Activated CD8-positive, alpha-beta T cell treated with anti-CD3 and anti-CD28 coated beads for 36 hours (primary cell): ENCODE measurements at regions of chr20 and their contacts with region 1.

Region 1: GRCh38 chr20:49846206-49846807 is 33.7 kb downstream of the SLC9A8 start:
- DNase-seq: peak; percentile 72
- ATAC-seq: peak; percentile 78
- H3K4me3 Mint-ChIP-seq: no peak overlapping the region
- H3K27ac Mint-ChIP-seq: no peak overlapping the region
- H3K4me1 Mint-ChIP-seq: no peaks in the 10 kb centered on the region
- H3K27me3 Mint-ChIP-seq: no peaks in the 10 kb centered on the region
- CTCF ChIP-seq: peak; percentile 76

Region 2: DNA sequence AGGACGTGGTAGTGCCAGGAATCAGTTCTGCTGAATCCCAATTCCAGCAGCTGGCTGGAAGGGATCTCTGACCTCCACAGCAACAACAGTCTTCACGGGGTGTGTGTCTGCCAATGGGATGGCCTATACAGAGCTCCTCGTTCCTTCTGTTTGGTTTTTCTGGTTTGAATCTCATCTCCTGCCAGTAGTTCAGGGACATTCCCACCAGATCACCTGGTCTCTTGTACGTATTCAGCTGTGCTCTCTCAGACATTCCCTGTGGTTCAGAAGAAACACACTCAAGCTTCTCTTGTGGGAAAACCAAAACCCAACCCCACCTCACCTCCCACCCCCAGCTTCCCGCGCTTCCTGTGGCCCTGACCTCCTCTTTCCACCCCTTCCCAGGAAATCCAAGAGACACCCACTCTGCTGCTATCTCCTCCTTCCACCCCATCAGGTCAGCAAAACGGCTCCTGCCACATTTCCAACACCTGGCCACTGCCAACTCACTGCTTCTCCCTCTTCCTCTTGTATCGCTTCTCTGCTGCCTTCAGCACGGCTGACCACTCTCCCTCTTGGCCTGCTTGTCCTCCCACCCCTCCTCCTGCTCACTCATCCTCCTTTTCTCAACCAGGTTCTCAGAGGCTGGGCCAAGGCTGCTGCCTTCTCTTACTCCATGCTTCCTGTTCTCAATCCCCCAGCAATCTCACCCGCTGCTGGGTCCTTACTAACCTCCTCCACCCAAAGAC is 215.1 kb before region 1 on chr20:
- CTCF ChIA-PET with region 1: interaction called, 19 read pairs
- POLR2A ChIA-PET with region 1: no interaction called
- intact Hi-C with region 1: no loop called
- DNase-seq: no peak
- ATAC-seq: no peak
- H3K4me3 Mint-ChIP-seq: no peak overlapping the region
- H3K27ac Mint-ChIP-seq: no peak overlapping the region
- H3K4me1 Mint-ChIP-seq: peaks cover 3% of the 10 kb centered on the region
- H3K27me3 Mint-ChIP-seq: peaks cover 2% of the 10 kb centered on the region
- CTCF ChIP-seq: no peak

Region 3: GRCh38 chr20:49713753-49714712 is 132.3 kb before region 1 on chr20 and contains the start of gene B4GALT5:
- CTCF ChIA-PET with region 1: interaction called, 12 read pairs
- POLR2A ChIA-PET with region 1: interaction called, 3 read pairs
- intact Hi-C with region 1: no loop called
- DNase-seq: peak; percentile 66
- ATAC-seq: peak; percentile 84
- H3K4me3 Mint-ChIP-seq: peak within 1 kb of the TSS; percentile 87
- H3K27ac Mint-ChIP-seq: peak within 1 kb of the TSS; percentile 90
- H3K4me1 Mint-ChIP-seq: peaks cover 46% of the 10 kb centered on the region
- H3K27me3 Mint-ChIP-seq: no peaks in the 10 kb centered on the region
- CTCF ChIP-seq: no peak
- total RNA-seq, gene B4GALT5: 16.5 to 16.8 TPM

Region 4: GRCh38 chr20:49823152-49823847 is 23.0 kb before region 1 on chr20:
- CTCF ChIA-PET with region 1: interaction called, 27 read pairs
- POLR2A ChIA-PET with region 1: no interaction called
- intact Hi-C with region 1: no loop called
- DNase-seq: no peak
- ATAC-seq: peak; percentile 92
- H3K4me3 Mint-ChIP-seq: no peak overlapping the region
- H3K27ac Mint-ChIP-seq: peak overlapping the region; percentile 78
- H3K4me1 Mint-ChIP-seq: peaks cover 52% of the 10 kb centered on the region
- H3K27me3 Mint-ChIP-seq: no peaks in the 10 kb centered on the region
- CTCF ChIP-seq: no peak

Region 5: GRCh38 chr20:49964964-49965780 is 118.9 kb after region 1 on chr20:
- CTCF ChIA-PET with region 1: no interaction called
- POLR2A ChIA-PET with region 1: no interaction called
- intact Hi-C with region 1: no loop called
- DNase-seq: peak; percentile 47
- ATAC-seq: peak; percentile 79
- H3K4me3 Mint-ChIP-seq: no peak overlapping the region
- H3K27ac Mint-ChIP-seq: no peak overlapping the region
- H3K4me1 Mint-ChIP-seq: no peaks in the 10 kb centered on the region
- H3K27me3 Mint-ChIP-seq: no peaks in the 10 kb centered on the region
- CTCF ChIP-seq: peak; percentile 68

Region 6: DNA sequence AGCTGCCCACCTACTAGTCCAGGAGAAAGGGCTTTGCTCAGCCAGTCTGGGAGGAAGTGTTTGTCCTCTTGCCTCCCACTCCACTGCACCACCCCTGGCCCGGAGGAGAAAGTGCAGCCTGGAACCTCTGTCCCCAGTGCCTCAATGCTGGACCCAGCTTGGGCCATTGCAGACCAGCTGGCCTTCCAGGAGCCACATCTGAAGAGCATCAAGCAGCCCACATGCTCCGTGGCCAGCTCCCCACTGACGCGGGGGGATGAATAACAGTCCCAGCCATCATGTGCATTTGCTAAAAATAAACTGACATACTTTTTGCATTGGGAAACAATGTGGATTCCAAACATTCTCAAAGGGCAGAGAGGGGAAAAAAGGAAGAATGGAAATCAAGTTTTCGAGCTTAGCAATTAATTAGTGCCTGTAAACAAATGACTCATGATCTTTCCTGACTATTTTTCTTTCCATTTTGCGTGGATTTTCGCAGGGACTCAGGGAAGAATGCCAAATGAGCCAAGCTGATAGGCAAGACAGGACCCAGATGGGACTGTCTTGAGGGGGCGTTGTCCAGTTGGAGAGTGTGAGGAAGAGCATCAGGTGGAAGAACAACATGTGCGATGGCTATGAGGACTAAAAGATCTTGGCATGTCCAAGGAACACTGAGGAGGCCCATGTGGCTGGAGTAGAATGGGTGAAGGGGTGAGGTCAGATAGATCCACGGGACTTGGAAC is 378.4 kb after region 1 on chr20:
- CTCF ChIA-PET with region 1: no interaction called
- POLR2A ChIA-PET with region 1: no interaction called
- intact Hi-C with region 1: no loop called
- DNase-seq: peak; percentile 20
- ATAC-seq: no peak
- H3K4me3 Mint-ChIP-seq: no peak overlapping the region
- H3K27ac Mint-ChIP-seq: no peak overlapping the region
- H3K4me1 Mint-ChIP-seq: peaks cover 18% of the 10 kb centered on the region
- H3K27me3 Mint-ChIP-seq: no peaks in the 10 kb centered on the region
- CTCF ChIP-seq: no peak

Region 7: DNA sequence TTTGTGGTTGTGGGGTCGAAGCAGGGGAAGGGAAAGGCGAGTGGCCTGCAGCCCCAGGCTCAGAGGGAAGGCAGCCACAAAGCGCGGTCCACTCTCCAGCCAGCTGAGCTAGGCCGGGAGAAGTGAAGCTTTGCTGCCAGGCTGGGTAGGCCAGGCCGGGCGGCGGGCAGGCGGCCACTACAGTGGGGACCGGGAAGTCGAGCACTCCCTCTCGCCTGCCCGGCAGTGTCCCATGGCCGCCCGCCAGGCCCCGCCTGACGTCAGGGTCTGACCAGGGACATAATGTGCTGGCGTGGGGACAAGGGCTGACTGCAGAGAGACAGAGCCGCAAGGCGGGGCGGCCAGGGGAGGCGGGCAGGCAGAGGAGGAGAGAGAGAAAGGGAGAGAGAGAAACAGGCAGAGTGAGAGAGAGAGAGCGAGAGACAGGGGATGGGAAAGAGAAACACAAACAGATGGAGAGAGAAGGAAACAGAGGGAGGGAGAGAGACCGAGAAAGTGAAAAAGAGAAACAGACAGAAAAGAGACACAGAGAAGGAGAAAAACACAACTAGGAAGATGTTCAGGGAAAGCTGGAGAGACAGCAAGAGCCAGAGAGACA is 569.3 kb after region 1 on chr20:
- CTCF ChIA-PET with region 1: no interaction called
- POLR2A ChIA-PET with region 1: no interaction called
- intact Hi-C with region 1: no loop called
- DNase-seq: no peak
- ATAC-seq: no peak
- H3K4me3 Mint-ChIP-seq: no peak overlapping the region
- H3K27ac Mint-ChIP-seq: no peak overlapping the region
- H3K4me1 Mint-ChIP-seq: no peaks in the 10 kb centered on the region
- H3K27me3 Mint-ChIP-seq: peaks cover 2% of the 10 kb centered on the region
- CTCF ChIP-seq: no peak